ENCODE measurements at regions of chr1 and their contacts with region 1.

Region 1: DNA sequence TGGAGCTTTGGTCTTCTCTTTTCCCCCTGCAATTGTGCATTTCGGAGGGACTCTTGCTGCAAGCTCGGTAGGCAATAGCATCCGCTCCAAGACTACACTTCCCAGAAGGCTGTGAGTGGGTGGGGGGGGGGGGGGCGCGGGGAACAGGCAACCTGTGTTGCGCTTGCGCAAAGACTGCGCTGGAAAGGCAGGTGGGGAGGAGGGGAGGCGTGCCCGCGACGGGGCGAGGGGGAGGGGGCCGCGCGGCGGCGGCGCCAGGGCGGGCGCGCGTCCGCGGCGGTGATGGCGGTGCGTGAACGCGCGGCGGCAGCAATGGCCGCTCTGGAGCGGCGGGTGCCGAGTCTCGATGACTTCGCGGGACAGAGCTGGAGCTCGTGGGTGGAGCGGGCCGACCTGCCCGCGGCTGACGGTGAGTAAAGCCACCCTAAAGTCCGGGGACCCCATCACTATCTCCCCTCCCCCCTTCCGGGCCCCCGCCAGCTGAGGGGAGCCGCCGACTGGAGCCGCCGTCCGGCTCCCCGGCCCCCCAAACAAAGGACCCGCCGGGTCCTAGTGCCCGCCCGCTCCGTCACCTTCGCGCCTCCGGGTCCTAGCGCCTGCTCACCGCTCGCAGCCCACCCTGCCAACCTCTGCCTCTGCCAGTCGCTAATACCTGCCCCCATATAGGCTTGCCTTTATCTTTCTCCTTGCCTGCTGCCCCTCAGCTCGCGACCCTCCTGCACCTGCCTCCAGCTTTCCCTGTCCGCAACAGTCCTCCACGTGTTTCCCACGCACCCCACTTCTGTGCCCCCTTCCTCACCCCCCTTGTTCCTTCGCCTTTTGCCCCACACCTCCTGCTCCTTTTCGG is at the start of gene ATXN7L2:
- DNase-seq: peak; percentile 89 to 95 (median 93)
- ATAC-seq: peak; percentile 91
- H3K4me3 ChIP-seq: peak within 1 kb of the TSS; percentile 98
- H3K4me3 Mint-ChIP-seq: peak within 1 kb of the TSS; percentile 93 to 99 (median 96)
- H3K27ac ChIP-seq: peak within 1 kb of the TSS; percentile 88
- H3K27ac Mint-ChIP-seq: peak within 1 kb of the TSS; percentile 83 to 97 (median 92)
- H3K4me1 ChIP-seq: peaks cover 9 to 14% of the 10 kb centered on the region in 2 donors
- H3K4me1 Mint-ChIP-seq: peaks cover 27 to 44% (median 35%) of the 10 kb centered on the region in 7 donors
- H3K27me3 ChIP-seq: no peaks in the 10 kb centered on the region
- H3K27me3 Mint-ChIP-seq: peaks cover 0 to 23% (median under 1%) of the 10 kb centered on the region in 5 donors
- total RNA-seq, gene ATXN7L2: 10.5 to 12.8 (median 11.7) TPM

Region 2: DNA sequence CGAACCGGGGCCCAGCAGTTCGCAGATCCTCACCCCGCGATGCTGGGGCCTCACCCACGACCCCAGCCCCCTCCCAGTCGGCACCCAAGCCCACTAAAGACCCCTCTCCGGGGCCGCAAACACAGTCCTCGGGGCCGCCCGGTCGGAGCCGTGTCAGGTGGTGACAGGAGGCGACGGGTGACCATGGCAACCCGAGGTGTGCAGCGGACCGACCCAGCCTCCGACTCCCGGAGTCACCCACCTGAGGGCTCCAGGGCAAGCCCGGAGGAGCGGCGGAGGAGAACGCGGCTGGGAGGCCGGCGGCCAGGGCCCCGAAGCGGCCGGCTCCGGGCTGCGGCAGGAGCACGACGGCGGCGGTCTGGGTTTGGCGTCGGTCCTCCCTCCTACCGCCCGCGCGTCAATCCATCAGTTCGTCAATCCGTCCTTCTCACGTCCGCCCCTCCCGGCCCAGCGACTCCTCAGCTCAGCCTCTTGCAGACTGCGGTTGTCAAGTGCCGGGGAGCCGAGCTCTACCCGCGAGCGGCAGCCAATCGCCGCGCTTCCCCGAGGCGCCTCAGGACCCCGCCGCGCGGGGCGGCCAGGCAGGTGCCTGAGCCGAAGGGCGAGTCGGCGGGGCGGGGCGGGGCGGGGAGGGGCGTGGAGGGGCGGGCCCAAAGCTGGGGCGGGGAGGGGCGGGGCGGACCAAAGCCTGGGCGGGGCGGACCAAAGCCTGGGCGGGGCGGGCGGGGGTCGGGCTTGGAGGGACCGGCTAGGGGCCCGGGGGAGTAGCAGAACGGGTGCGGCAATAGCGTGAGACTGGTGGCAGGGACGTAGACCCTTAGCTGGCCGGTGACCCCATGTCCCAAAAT is 442.1 kb before region 1 on chr1 and contains the start of gene WDR47:
- CTCF ChIA-PET with region 1: no interaction called
- POLR2A ChIA-PET with region 1: no interaction called
- intact Hi-C with region 1: loop called in 1 of 2 experiments (anchors 2 kb)
- DNase-seq: peak; percentile 95 to 97 (median 96)
- ATAC-seq: peak; percentile 99
- H3K4me3 ChIP-seq: peak within 1 kb of the TSS; percentile 97
- H3K4me3 Mint-ChIP-seq: peak within 1 kb of the TSS; percentile 86 to 97 (median 94)
- H3K27ac ChIP-seq: peak within 1 kb of the TSS; percentile 90
- H3K27ac Mint-ChIP-seq: peak within 1 kb of the TSS; percentile 78 to 97 (median 91)
- H3K4me1 ChIP-seq: peaks cover 0 to 7% of the 10 kb centered on the region in 2 donors
- H3K4me1 Mint-ChIP-seq: peaks cover 7 to 25% (median 16%) of the 10 kb centered on the region in 7 donors
- H3K27me3 ChIP-seq: no peaks in the 10 kb centered on the region
- H3K27me3 Mint-ChIP-seq: peaks cover 0 to 7% (median 0%) of the 10 kb centered on the region in 5 donors
- total RNA-seq, gene WDR47: 9.8 to 15.4 (median 14.4) TPM

Region 3: GRCh38 chr1:109112652-109113285 is 371.1 kb before region 1 on chr1:
- CTCF ChIA-PET with region 1: interaction called, 3 read pairs
- POLR2A ChIA-PET with region 1: no interaction called
- intact Hi-C with region 1: loop called in 1 of 2 experiments (anchors 1 kb)
- DNase-seq: peak; percentile 75 to 93 (median 85)
- ATAC-seq: peak; percentile 75
- H3K4me3 ChIP-seq: peak overlapping the region; percentile 68
- H3K4me3 Mint-ChIP-seq: peak overlapping the region; percentile 78 to 93 (median 88)
- H3K27ac ChIP-seq: peak overlapping the region; percentile 68
- H3K27ac Mint-ChIP-seq: peak overlapping the region; percentile 84 to 96 (median 92)
- H3K4me1 ChIP-seq: peaks cover 16 to 21% of the 10 kb centered on the region in 2 donors
- H3K4me1 Mint-ChIP-seq: peaks cover 23 to 40% (median 28%) of the 10 kb centered on the region in 7 donors
- H3K27me3 ChIP-seq: no peaks in the 10 kb centered on the region
- H3K27me3 Mint-ChIP-seq: peaks cover 0 to 41% (median 0%) of the 10 kb centered on the region in 5 donors

Region 4: GRCh38 chr1:109298666-109299557 is 185.0 kb before region 1 on chr1:
- CTCF ChIA-PET with region 1: no interaction called
- POLR2A ChIA-PET with region 1: no interaction called
- intact Hi-C with region 1: no loop called
- DNase-seq: peak in 1 of 9 donors; percentile 25
- ATAC-seq: no peak
- H3K4me3 ChIP-seq: no peak overlapping the region
- H3K4me3 Mint-ChIP-seq: no peak overlapping the region
- H3K27ac ChIP-seq: no peak overlapping the region
- H3K27ac Mint-ChIP-seq: no peak overlapping the region
- H3K4me1 ChIP-seq: no peaks in the 10 kb centered on the region
- H3K4me1 Mint-ChIP-seq: peaks cover 0 to 3% (median 0%) of the 10 kb centered on the region in 7 donors
- H3K27me3 ChIP-seq: no peaks in the 10 kb centered on the region
- H3K27me3 Mint-ChIP-seq: peaks cover 0 to 17% (median 10%) of the 10 kb centered on the region in 5 donors

Region 5: GRCh38 chr1:109426278-109427170 is 57.4 kb before region 1 on chr1 and contains the start of gene PSMA5:
- CTCF ChIA-PET with region 1: no interaction called
- POLR2A ChIA-PET with region 1: interaction called, 34 read pairs
- intact Hi-C with region 1: loop called (anchors 1 kb)
- DNase-seq: peak; percentile 73 to 97 (median 95)
- ATAC-seq: peak; percentile 96
- H3K4me3 ChIP-seq: peak within 1 kb of the TSS; percentile 77
- H3K4me3 Mint-ChIP-seq: peak within 1 kb of the TSS; percentile 95 to 99 (median 98)
- H3K27ac ChIP-seq: peak within 1 kb of the TSS; percentile 91
- H3K27ac Mint-ChIP-seq: peak within 1 kb of the TSS; percentile 80 to 99 (median 98)
- H3K4me1 ChIP-seq: peaks cover 27 to 29% of the 10 kb centered on the region in 2 donors
- H3K4me1 Mint-ChIP-seq: peaks cover 29 to 46% (median 34%) of the 10 kb centered on the region in 7 donors
- H3K27me3 ChIP-seq: no peaks in the 10 kb centered on the region
- H3K27me3 Mint-ChIP-seq: no peaks in the 10 kb centered on the region
- total RNA-seq, gene PSMA5: 38.3 to 203 (median 70.7) TPM

Region 6: GRCh38 chr1:109441069-109441468 is 42.8 kb before region 1 on chr1:
- CTCF ChIA-PET with region 1: no interaction called
- POLR2A ChIA-PET with region 1: no interaction called
- intact Hi-C with region 1: no loop called
- DNase-seq: no peak
- ATAC-seq: no peak
- H3K4me3 ChIP-seq: no peak overlapping the region
- H3K4me3 Mint-ChIP-seq: no peak overlapping the region
- H3K27ac ChIP-seq: no peak overlapping the region
- H3K27ac Mint-ChIP-seq: no peak overlapping the region
- H3K4me1 ChIP-seq: no peaks in the 10 kb centered on the region
- H3K4me1 Mint-ChIP-seq: no peaks in the 10 kb centered on the region
- H3K27me3 ChIP-seq: peaks cover 3 to 5% of the 10 kb centered on the region in 2 donors
- H3K27me3 Mint-ChIP-seq: peaks cover 4 to 12% (median 8%) of the 10 kb centered on the region in 5 donors

Region 7: DNA sequence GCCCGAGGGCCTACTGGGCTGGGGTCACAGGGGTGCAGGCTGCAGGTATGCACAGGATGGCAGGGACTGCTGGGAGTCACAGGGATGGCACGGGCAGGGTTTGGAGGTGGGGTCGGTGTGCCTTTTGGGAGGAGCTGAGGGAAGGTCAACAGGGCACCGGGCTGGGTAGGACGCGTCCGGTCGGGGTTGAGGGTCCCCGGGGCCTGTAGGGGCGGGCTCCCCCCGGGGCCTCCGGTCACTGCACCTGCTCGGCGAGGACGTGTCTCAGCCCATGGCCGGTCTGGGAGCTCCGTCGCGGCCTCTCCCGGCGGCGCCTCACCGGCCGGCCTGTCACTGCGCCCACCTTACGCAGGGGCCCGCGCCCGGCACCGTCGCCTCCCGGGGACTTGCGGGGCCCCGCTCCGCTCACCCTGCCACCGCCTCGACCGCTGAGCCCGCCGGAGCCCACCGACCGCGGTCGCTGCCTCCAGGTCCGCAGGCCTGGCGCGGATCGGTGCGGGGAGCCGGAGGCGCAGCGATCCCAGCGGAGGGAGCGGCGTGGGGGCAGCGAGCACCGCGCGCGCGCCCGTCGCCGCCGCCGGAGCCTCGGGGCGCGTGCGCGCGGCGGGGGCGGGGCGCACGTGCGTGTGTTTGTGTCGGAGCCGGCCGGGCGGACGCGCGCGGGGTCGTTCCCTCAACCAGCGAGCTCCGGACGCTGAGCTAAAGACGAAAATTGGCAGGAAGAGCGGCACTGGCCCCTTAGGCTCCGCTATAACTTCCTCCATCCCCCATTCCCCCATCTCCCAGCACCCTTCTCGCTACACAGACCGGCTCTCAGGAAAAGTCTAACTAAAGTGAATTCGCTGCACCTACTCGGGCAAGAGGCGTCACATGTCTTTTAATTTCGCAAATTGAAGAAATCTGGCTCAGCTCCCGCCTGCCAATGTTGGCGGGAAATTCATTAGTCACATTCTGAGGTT is 25.6 kb after region 1 on chr1 and contains the start of gene AMIGO1:
- CTCF ChIA-PET with region 1: interaction called, 417 read pairs
- POLR2A ChIA-PET with region 1: interaction called, 478 read pairs
- intact Hi-C with region 1: loop called in 1 of 2 experiments (anchors 1 kb)
- DNase-seq: peak; percentile 61 to 76 (median 71)
- ATAC-seq: peak; percentile 88
- H3K4me3 ChIP-seq: peak within 1 kb of the TSS; percentile 75
- H3K4me3 Mint-ChIP-seq: peak within 1 kb of the TSS; percentile 91 to 97 (median 96)
- H3K27ac ChIP-seq: peak within 1 kb of the TSS; percentile 81
- H3K27ac Mint-ChIP-seq: peak within 1 kb of the TSS in 8 of 9 donors; percentile 94 to 99 (median 98)
- H3K4me1 ChIP-seq: peaks cover 22 to 58% of the 10 kb centered on the region in 2 donors
- H3K4me1 Mint-ChIP-seq: peaks cover 37 to 75% (median 68%) of the 10 kb centered on the region in 7 donors
- H3K27me3 ChIP-seq: no peaks in the 10 kb centered on the region
- H3K27me3 Mint-ChIP-seq: peaks cover 0 to 47% (median 0%) of the 10 kb centered on the region in 5 donors
- total RNA-seq, gene AMIGO1: 2.9 to 42.2 (median 17.7) TPM

Region 8: GRCh38 chr1:109910123-109910962 is 426.4 kb after region 1 on chr1 and contains the start of gene CSF1:
- CTCF ChIA-PET with region 1: no interaction called
- POLR2A ChIA-PET with region 1: no interaction called
- intact Hi-C with region 1: loop called in 1 of 2 experiments (anchors 5 kb)
- DNase-seq: peak; percentile 15 to 72 (median 35)
- ATAC-seq: peak; percentile 71
- H3K4me3 ChIP-seq: peak within 1 kb of the TSS; percentile 65
- H3K4me3 Mint-ChIP-seq: peak within 1 kb of the TSS; percentile 78 to 98 (median 88)
- H3K27ac ChIP-seq: peak within 1 kb of the TSS; percentile 43
- H3K27ac Mint-ChIP-seq: peak within 1 kb of the TSS; percentile 38 to 97 (median 73)
- H3K4me1 ChIP-seq: peaks cover 36 to 43% of the 10 kb centered on the region in 2 donors
- H3K4me1 Mint-ChIP-seq: peaks cover 43 to 83% (median 64%) of the 10 kb centered on the region in 7 donors
- H3K27me3 ChIP-seq: no peaks in the 10 kb centered on the region
- H3K27me3 Mint-ChIP-seq: peaks cover 0 to 18% (median 0%) of the 10 kb centered on the region in 5 donors
- total RNA-seq, gene CSF1: 1.4 to 125 (median 5.9) TPM